Dendritic cell treated with granulocyte-macrophage colony-stimulating factor and Interleukin-4, amounts not matched to agents 40 ng/mL and 50 ng/mL, for 4 days (primary cell): ENCODE measurements at regions of chr12 and their contacts with region 1.

Region 1: DNA sequence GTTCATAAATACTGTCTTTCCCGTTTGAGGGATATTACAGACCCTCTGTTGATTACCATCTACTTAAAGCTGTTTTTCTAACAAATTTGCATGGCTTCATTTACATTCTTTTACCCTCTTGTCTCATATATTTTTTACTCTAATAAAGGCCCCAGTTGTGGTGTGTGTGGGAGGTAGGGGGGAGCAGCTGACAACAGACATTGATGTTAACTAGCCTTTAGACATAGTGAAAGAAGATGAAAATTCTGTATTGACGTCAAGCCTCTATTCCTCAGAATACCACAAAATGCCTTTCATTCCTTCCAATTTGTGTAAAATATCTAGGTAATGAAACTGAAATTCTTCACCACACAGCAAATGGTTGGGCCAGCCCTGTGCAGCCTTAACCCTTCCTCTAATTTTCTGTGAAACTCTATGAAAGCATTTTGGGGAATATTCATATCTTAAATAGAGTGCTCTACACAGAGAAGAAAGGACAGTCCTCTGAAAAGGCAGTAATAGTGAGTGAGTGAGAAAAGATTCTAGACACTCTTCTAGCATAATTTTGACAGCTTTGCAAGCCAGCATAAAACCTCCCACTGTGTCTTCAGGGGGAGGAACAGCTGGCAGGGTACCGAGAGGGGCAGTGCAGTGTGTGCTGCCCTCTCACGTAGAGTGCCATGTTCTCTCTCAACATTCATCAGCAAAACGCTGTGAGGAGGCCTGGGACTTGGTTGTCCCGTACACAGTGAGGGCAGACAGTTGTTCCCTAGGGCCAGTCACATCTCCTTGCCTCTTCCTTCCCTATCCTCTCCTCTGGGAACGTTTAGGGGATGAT is 20.1 kb upstream of the CERS5 start:
- H3K4me3 Mint-ChIP-seq: no peak overlapping the region
- H3K27ac Mint-ChIP-seq: no peak overlapping the region
- H3K4me1 Mint-ChIP-seq: peaks cover 5% of the 10 kb centered on the region
- H3K27me3 Mint-ChIP-seq: no peaks in the 10 kb centered on the region

Region 2: GRCh38 chr12:50314629-50315312 is 127.5 kb after region 1 on chr12:
- intact Hi-C with region 1: loop called (anchors 5 kb)
- H3K4me3 Mint-ChIP-seq: no peak overlapping the region
- H3K27ac Mint-ChIP-seq: no peak overlapping the region
- H3K4me1 Mint-ChIP-seq: no peaks in the 10 kb centered on the region
- H3K27me3 Mint-ChIP-seq: no peaks in the 10 kb centered on the region